A673 (cell line): ENCODE measurements at regions of chr5 and their contacts with region 1.

Region 1: GRCh38 chr5:61683148-61683547 is 351.1 kb downstream of the ZSWIM6 start:
- DNase-seq: peak; percentile 62
- H3K4me3 ChIP-seq: no peak overlapping the region
- H3K27ac ChIP-seq: peak overlapping the region; percentile 96
- H3K4me1 ChIP-seq: peaks cover 43% of the 10 kb centered on the region
- H3K27me3 ChIP-seq: no peaks in the 10 kb centered on the region
- CTCF ChIP-seq: no peak

Region 2: GRCh38 chr5:61817472-61818326 is 134.6 kb after region 1 on chr5:
- CTCF ChIA-PET with region 1: interaction called, 3 read pairs
- POLR2A ChIA-PET with region 1: interaction called, 3 read pairs
- intact Hi-C with region 1: loop called (anchors 5 kb)
- DNase-seq: peak; percentile 84
- H3K4me3 ChIP-seq: no peak overlapping the region
- H3K27ac ChIP-seq: peak overlapping the region; percentile 62
- H3K4me1 ChIP-seq: peaks cover 33% of the 10 kb centered on the region
- H3K27me3 ChIP-seq: no peaks in the 10 kb centered on the region
- CTCF ChIP-seq: peak; percentile 85